ENCODE measurements at regions of chr1 and their contacts with region 1.

Region 1: GRCh38 chr1:20151906-20152598 is 12.9 kb downstream of the PLA2G2F start:
- DNase-seq: peak; percentile 47 to 79 (median 71)
- ATAC-seq: peak; percentile 93
- H3K4me3 ChIP-seq: peak overlapping the region; percentile 71
- H3K4me3 Mint-ChIP-seq: peak overlapping the region; percentile 74 to 90 (median 82)
- H3K27ac ChIP-seq: no peak overlapping the region
- H3K27ac Mint-ChIP-seq: peak overlapping the region in 3 of 9 donors; percentile 25 to 61 (median 60)
- H3K4me1 ChIP-seq: peaks cover 5 to 11% of the 10 kb centered on the region in 2 donors
- H3K4me1 Mint-ChIP-seq: peaks cover 6 to 20% (median 12%) of the 10 kb centered on the region in 7 donors
- H3K27me3 ChIP-seq: no peaks in the 10 kb centered on the region
- H3K27me3 Mint-ChIP-seq: no peaks in the 10 kb centered on the region

Region 2: DNA sequence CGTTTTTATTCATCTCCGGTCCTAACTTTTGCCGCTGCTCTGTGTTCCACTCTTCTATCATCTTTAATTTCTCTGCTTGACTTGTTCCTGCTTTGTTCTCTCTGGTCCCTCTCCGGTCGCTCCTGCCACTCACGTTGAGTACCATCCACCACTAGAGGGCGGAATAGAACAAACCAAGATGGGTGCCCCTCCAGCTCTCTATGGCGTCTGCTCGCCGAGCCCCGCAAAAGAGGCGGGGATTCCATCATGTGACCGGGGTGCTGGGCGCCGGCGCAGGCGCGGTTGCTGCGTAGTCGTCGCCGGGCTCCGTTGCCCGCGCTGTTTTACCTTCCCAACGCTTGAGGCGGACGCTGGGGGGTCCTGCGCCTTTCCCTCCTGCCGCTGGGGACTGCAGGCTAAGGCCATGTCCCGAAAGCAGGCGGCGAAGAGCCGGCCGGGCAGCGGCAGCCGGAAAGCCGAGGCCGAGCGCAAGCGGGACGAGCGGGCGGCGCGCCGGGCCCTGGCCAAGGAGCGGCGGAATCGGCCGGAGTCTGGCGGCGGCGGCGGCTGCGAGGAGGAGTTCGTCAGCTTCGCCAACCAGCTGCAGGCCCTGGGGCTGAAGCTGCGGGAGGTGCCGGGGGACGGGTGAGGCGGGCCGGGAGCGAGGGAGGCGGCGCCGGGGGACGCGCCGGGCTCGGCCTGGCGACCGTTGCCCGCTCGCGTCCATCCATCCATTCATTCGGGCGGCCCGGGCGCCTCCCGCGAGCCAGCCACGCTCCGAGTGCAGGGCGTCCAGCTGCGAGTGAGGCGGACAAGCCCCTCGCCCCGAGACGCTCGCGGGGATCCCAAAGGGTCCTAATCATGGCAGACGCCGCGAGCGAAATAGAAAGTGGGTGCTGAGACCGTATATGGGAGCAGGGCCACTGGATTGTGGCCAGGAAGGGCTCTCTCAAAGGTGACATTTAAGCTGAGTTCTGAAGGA is 269.7 kb before region 1 on chr1 and contains the start of gene OTUD3:
- CTCF ChIA-PET with region 1: interaction called, 4 read pairs
- POLR2A ChIA-PET with region 1: no interaction called
- intact Hi-C with region 1: loop called (anchors 1 kb)
- DNase-seq: peak; percentile 87 to 97 (median 96)
- ATAC-seq: peak; percentile 100
- H3K4me3 ChIP-seq: peak within 1 kb of the TSS; percentile 66
- H3K4me3 Mint-ChIP-seq: peak within 1 kb of the TSS; percentile 77 to 95 (median 88)
- H3K27ac ChIP-seq: peak within 1 kb of the TSS; percentile 82
- H3K27ac Mint-ChIP-seq: peak within 1 kb of the TSS; percentile 3 to 88 (median 75)
- H3K4me1 ChIP-seq: peaks cover 15 to 23% of the 10 kb centered on the region in 2 donors
- H3K4me1 Mint-ChIP-seq: peaks cover 20 to 50% (median 47%) of the 10 kb centered on the region in 7 donors
- H3K27me3 ChIP-seq: no peaks in the 10 kb centered on the region
- H3K27me3 Mint-ChIP-seq: peaks cover 0 to 15% (median 6%) of the 10 kb centered on the region in 5 donors
- total RNA-seq, gene OTUD3: 13.1 to 23.6 (median 20.8) TPM

Region 3: DNA sequence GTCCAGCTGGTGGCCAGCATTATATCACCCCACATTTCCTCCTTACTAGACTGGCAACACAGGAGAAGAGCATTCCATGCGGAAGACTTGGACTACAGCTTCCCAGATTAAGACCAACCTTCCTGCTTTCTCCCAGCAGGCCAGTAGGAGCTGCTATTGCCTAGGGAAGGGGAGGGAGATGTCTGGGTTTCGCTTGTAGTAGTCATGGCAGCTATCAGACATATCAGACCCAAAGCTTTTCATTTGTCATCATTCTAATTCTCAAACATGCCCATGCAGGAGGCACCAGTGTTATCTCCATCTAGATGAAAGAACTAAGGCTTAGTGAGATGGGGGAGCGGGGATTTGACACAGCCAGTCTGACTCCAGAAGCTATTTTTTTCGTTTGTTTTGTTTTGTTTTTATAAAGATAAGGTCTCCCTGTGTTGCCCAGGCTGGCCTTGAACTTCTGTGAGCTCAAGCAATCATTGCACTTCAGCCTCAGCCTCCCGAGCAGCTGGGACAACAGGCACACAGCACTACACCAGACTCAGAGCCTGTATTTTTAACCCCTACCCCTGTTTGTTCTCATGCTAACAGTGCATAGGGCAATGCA is 177.1 kb before region 1 on chr1:
- CTCF ChIA-PET with region 1: no interaction called
- POLR2A ChIA-PET with region 1: no interaction called
- intact Hi-C with region 1: loop called in 1 of 2 experiments (anchors 1 kb)
- DNase-seq: peak in 4 of 9 donors; percentile 9 to 25 (median 16)
- ATAC-seq: peak; percentile 47
- H3K4me3 ChIP-seq: no peak overlapping the region
- H3K4me3 Mint-ChIP-seq: no peak overlapping the region
- H3K27ac ChIP-seq: no peak overlapping the region
- H3K27ac Mint-ChIP-seq: no peak overlapping the region
- H3K4me1 ChIP-seq: no peaks in the 10 kb centered on the region
- H3K4me1 Mint-ChIP-seq: peaks cover 0 to 2% (median 0%) of the 10 kb centered on the region in 7 donors
- H3K27me3 ChIP-seq: no peaks in the 10 kb centered on the region
- H3K27me3 Mint-ChIP-seq: peaks cover 12 to 35% (median 28%) of the 10 kb centered on the region in 5 donors

Region 4: DNA sequence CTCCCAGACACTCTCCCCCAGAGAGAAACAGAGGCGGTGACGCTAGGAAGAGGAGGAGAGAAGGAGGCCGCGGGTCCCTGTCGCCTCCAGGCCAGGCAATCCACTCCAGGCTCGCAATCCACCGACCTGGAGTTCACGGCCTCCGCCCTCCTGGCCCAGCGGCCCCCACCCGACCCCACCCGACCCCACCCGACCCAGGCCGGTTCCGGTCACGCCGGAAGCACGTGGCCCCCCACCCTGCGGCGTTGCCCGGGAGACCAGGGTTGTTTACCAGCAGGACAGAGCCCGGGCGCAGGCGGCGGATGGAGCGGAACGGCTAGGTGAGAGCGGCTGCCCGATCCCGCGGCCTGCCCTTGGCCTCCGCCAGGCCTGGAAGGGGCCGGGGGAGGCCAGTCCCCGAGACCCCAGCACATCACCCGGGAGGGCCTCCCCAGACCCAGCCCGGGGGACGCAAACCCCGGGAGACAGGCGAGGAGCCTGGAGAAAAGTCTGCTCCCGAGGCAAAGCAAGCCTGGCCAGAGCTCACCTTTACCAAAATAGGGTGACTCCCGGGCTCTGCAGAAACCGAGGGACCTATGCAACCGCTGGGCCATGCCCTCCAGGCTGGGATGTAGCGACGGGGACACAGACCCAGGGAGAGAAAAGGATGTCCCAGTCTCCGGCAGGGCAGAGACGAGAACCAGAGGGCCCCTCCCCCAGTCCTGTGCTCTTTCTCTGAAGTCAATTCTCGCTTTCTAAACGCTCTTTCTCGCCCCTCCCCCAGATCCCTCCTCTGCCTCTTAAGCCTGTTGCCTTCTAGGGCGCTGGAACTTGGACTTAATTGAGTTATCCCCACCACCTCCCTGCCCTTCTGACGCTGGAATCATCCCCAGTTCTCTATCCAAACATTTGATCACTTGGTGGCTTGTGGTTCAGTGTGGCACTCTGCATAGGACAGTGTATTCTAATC is 34.1 kb after region 1 on chr1 and contains the starts of genes PLA2G2C and UBXN10:
- CTCF ChIA-PET with region 1: interaction called, 3 read pairs
- POLR2A ChIA-PET with region 1: no interaction called
- intact Hi-C with region 1: loop called in 1 of 2 experiments (anchors 1 kb)
- DNase-seq: peak; percentile 19 to 73 (median 49)
- ATAC-seq: peak; percentile 53
- H3K4me3 ChIP-seq: peak within 1 kb of the TSS; percentile 68
- H3K4me3 Mint-ChIP-seq: peak within 1 kb of the TSS; percentile 80 to 91 (median 88)
- H3K27ac ChIP-seq: peak within 1 kb of the TSS; percentile 40
- H3K27ac Mint-ChIP-seq: peak within 1 kb of the TSS; percentile 80 to 90 (median 87)
- H3K4me1 ChIP-seq: peaks cover 19 to 41% of the 10 kb centered on the region in 2 donors
- H3K4me1 Mint-ChIP-seq: peaks cover 42 to 56% (median 56%) of the 10 kb centered on the region in 7 donors
- H3K27me3 ChIP-seq: no peaks in the 10 kb centered on the region
- H3K27me3 Mint-ChIP-seq: peaks cover 0 to 14% (median 0%) of the 10 kb centered on the region in 5 donors
- total RNA-seq, gene PLA2G2C: 0.46 TPM in 1 of 5 experiments, not detected in the others
- total RNA-seq, gene UBXN10: 0.37 to 1.1 (median 0.73) TPM in 3 of 5 experiments, not detected in the others

Measured in naive thymus-derived CD4-positive, alpha-beta T cell (primary cell).